Endothelial cell of umbilical vein (primary cell): ENCODE measurements at regions of chr2 and their contacts with region 1.

Region 1: DNA sequence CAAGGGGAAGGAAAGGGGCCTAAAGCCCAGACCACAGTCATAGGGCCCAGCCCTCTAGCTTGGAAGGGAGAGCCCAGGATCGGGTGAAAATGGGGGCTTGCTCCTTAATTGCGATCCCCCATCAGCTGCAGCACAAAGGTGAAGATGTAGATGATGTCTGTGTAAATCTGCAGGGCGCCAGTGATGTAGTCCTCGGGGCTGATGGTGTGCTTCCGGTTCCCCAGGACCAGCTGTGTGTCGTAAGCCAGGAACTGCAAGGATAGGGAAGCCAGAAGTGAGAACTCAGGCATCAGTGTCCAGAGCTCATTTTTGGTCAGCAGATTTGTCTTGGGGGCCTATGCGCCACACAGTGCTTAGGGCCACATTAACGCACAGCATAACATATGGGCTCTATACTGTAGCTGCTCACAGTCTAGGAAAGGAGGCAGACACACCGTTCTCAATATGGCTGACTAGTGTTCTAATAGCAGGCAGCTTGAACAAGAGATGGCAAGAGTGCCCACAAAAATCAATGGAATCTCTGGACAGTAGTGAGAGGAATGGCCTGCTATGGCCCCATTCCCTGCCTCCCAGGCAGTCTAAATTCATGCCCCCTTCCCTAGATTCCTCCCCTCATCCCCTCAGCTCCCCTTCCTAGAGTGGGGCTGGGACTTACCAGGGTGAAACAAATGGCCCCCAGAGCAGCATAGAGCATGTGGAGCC is 5.2 kb downstream of the PNKD start:
- DNase-seq: no peak
- H3K4me3 ChIP-seq: no peak overlapping the region
- H3K27ac ChIP-seq: no peak overlapping the region
- H3K4me1 ChIP-seq: peaks cover 14% of the 10 kb centered on the region
- H3K27me3 ChIP-seq: no peaks in the 10 kb centered on the region
- CTCF ChIP-seq: no peak
- POLR2A ChIP-seq: no peak

Region 2: GRCh38 chr2:218286570-218287459 is 11.3 kb after region 1 on chr2:
- CTCF ChIA-PET with region 1: interaction called, 51 read pairs
- POLR2A ChIA-PET with region 1: interaction called, 9 read pairs
- dilution Hi-C with region 1: no loop called
- intact Hi-C with region 1: loop called (anchors 1 kb)
- DNase-seq: peak; percentile 93
- H3K4me3 ChIP-seq: no peak overlapping the region
- H3K27ac ChIP-seq: peak overlapping the region; percentile 88
- H3K4me1 ChIP-seq: peaks cover 77% of the 10 kb centered on the region
- H3K27me3 ChIP-seq: no peaks in the 10 kb centered on the region
- CTCF ChIP-seq: no peak
- POLR2A ChIP-seq: peak; percentile 16